ENCODE measurements at regions of chr12 and their contacts with region 1.

Region 1: GRCh38 chr12:29682088-29682487 is 101.7 kb downstream of the TMTC1 start:
- DNase-seq: no peak
- ATAC-seq: peak; percentile 84
- H3K4me3 ChIP-seq: no peak overlapping the region
- H3K27ac ChIP-seq: no peak overlapping the region
- H3K4me1 ChIP-seq: no peaks in the 10 kb centered on the region
- H3K27me3 ChIP-seq: no peaks in the 10 kb centered on the region
- CTCF ChIP-seq: no peak
- EP300 ChIP-seq: peak in 1 of 2 experiments; percentile 67; a peak in 1 of 4 replicates
- POLR2A ChIP-seq: no peak
- RAD21 ChIP-seq: no peak

Region 2: GRCh38 chr12:29447285-29447975 is 234.7 kb before region 1 on chr12:
- CTCF ChIA-PET with region 1: no interaction called
- POLR2A ChIA-PET with region 1: no interaction called
- RAD21 ChIA-PET with region 1: no interaction called
- SMC1A ChIA-PET with region 1: no interaction called
- in situ Hi-C with region 1: no loop called
- intact Hi-C with region 1: no loop called
- DNase-seq: no peak
- ATAC-seq: peak; percentile 27; the same call in 2 of the 3 replicates
- H3K4me3 ChIP-seq: no peak overlapping the region
- H3K27ac ChIP-seq: no peak overlapping the region
- H3K4me1 ChIP-seq: no peaks in the 10 kb centered on the region
- H3K27me3 ChIP-seq: no peaks in the 10 kb centered on the region
- CTCF ChIP-seq: no peak
- EP300 ChIP-seq: no peak
- POLR2A ChIP-seq: no peak
- RAD21 ChIP-seq: no peak

Region 3: GRCh38 chr12:29750131-29750927 is 68.2 kb after region 1 on chr12:
- CTCF ChIA-PET with region 1: no interaction called
- POLR2A ChIA-PET with region 1: no interaction called
- RAD21 ChIA-PET with region 1: interaction called, 7 read pairs
- SMC1A ChIA-PET with region 1: interaction called, 5 read pairs
- in situ Hi-C with region 1: no loop called
- intact Hi-C with region 1: loop called (anchors 2 kb)
- DNase-seq: peak; percentile 75
- ATAC-seq: peak; percentile 95
- H3K4me3 ChIP-seq: no peak overlapping the region
- H3K27ac ChIP-seq: no peak overlapping the region
- H3K4me1 ChIP-seq: peaks cover 9% of the 10 kb centered on the region
- H3K27me3 ChIP-seq: no peaks in the 10 kb centered on the region
- CTCF ChIP-seq: no peak
- EP300 ChIP-seq: peak in 1 of 2 experiments; percentile 41; a peak in 1 of 4 replicates
- POLR2A ChIP-seq: no peak
- RAD21 ChIP-seq: no peak

Region 4: DNA sequence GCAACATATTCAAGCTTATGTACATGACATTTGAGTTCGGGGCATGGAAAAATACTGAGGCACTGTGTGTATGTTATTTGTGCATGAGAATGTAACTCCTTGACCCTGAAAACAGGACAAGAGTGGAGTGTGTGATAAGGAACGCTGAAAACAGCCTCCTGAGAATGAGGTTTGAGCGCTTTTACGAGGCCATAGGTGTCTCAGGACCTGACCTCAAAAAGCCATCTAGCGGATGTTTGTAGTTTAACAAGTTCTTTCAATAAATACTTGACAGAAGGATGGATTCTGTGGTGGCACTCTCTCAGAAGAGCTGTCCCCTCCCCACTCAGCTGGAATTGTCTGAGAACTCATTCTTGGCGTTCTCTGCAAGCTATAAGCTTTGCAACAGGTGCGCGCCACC is 452.1 kb after region 1 on chr12:
- CTCF ChIA-PET with region 1: no interaction called
- POLR2A ChIA-PET with region 1: interaction called, 13 read pairs
- RAD21 ChIA-PET with region 1: no interaction called
- SMC1A ChIA-PET with region 1: no interaction called
- in situ Hi-C with region 1: no loop called
- intact Hi-C with region 1: no loop called
- DNase-seq: no peak
- ATAC-seq: peak; percentile 77
- H3K4me3 ChIP-seq: no peak overlapping the region
- H3K27ac ChIP-seq: no peak overlapping the region
- H3K4me1 ChIP-seq: no peaks in the 10 kb centered on the region
- H3K27me3 ChIP-seq: no peaks in the 10 kb centered on the region
- CTCF ChIP-seq: peak in 2 of 3 experiments; percentile 24 to 33; a peak in 3 of 6 replicates
- EP300 ChIP-seq: no peak
- POLR2A ChIP-seq: no peak
- RAD21 ChIP-seq: no peak